Endothelial cell of umbilical vein (primary cell): ENCODE measurements at regions of chr10 and their contacts with region 1.

Region 1: GRCh38 chr10:50385624-50386023 is 134.3 kb upstream of the ASAH2 start:
- DNase-seq: no peak
- H3K4me3 ChIP-seq: no peak overlapping the region
- H3K27ac ChIP-seq: no peak overlapping the region
- H3K4me1 ChIP-seq: no peaks in the 10 kb centered on the region
- H3K27me3 ChIP-seq: no peaks in the 10 kb centered on the region
- CTCF ChIP-seq: no peak
- POLR2A ChIP-seq: no peak

Region 2: GRCh38 chr10:50396491-50397311 is 11.1 kb after region 1 on chr10:
- CTCF ChIA-PET with region 1: interaction called, 12 read pairs
- POLR2A ChIA-PET with region 1: interaction called, 4 read pairs
- dilution Hi-C with region 1: no loop called
- intact Hi-C with region 1: no loop called
- DNase-seq: no peak
- H3K4me3 ChIP-seq: no peak overlapping the region
- H3K27ac ChIP-seq: no peak overlapping the region
- H3K4me1 ChIP-seq: peaks cover 18% of the 10 kb centered on the region
- H3K27me3 ChIP-seq: no peaks in the 10 kb centered on the region
- CTCF ChIP-seq: no peak
- POLR2A ChIP-seq: no peak